B cell (primary cell): ENCODE measurements at regions of chr1 and their contacts with region 1.

Region 1: DNA sequence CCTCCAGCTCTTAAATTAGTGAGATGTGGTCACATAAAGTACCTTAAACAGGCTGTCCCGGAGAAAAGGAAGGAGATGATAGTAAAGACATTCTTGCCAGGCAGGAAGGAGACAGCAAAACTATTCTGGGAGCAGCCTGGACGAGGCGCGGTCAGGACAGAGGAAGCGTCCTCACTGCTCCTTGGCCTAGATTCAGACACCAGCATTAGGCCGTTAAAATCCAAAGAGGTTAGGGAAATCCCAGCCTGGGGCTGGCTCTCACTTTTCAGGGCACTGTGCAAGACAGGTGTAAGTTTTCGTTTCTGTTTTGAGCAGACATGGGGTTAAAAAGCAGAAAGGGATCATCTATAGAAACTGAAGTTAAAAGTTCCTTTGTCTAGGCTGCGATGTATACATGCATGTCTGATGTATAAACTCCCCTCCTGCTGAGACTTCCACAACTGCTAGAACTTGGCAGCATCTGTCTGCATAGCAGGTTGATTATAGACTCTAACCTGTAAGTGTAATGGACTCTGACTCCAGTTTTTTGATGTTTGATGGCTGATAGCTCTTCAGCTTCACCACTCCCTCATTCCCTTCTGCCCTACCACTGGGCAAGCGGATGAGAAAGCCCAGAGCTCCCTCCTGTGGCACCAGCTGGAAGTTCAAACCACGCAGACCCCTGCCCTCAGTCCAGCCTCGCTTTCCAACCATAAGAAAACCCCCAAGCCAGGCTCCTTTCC is 21.5 kb downstream of the STPG1 start:
- DNase-seq: peak; percentile 80
- ATAC-seq: peak; percentile 75
- H3K4me3 ChIP-seq: peak overlapping the region in 2 of 5 experiments; percentile 5 to 37
- H3K4me3 Mint-ChIP-seq: peak overlapping the region; percentile 81
- H3K27ac ChIP-seq: peak overlapping the region; percentile 81 to 92
- H3K27ac Mint-ChIP-seq: peak overlapping the region; percentile 92
- H3K4me1 ChIP-seq: peaks cover 26 to 33% of the 10 kb centered on the region in 2 donors
- H3K4me1 Mint-ChIP-seq: peaks cover 31% of the 10 kb centered on the region
- H3K27me3 ChIP-seq: no peaks in the 10 kb centered on the region
- H3K27me3 Mint-ChIP-seq: no peaks in the 10 kb centered on the region
- CTCF ChIP-seq: peak; percentile 74

Region 2: DNA sequence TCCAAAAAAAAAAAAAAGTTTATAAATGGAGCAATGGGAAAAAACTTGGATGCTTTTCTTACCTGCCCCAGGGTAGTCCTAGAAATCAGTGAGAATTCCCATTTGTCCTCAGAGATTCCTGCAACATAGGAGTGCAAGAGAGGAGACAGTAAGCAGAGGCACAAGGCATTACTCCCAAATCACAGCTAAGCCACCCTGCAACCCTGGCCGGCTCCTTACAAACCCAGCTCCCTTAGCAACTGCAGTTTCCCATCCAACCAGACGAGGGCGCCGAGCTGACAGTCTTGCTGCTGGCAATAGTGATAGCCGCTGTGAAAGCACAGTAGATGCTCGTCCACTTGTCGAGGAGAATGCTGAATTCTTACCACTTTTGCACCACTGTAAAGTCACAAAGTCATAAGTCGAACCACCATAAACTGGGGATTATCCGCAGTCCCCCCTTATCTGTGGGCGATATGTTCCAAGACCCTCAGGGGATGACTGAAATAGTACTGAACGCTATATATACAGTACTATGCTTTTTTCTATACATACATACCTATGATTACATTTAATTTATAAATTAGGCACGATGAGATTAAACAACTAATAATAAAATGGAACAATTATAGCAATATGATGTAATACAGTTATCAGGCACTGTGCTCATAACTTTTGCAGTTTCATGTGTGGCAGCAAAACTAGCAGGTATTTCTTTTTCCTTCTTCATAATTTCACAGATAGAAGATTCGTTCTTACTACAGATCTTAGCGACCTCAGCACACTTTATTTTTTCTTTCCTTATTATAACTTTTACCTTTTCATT is 619.8 kb before region 1 on chr1:
- CTCF ChIA-PET with region 1: interaction called, 22 read pairs
- POLR2A ChIA-PET with region 1: no interaction called
- intact Hi-C with region 1: no loop called
- DNase-seq: peak; percentile 86
- ATAC-seq: peak; percentile 100
- H3K4me3 ChIP-seq: no peak overlapping the region
- H3K4me3 Mint-ChIP-seq: no peak overlapping the region
- H3K27ac ChIP-seq: no peak overlapping the region
- H3K27ac Mint-ChIP-seq: no peak overlapping the region
- H3K4me1 ChIP-seq: peaks cover 4 to 5% of the 10 kb centered on the region in 2 donors
- H3K4me1 Mint-ChIP-seq: peaks cover 9% of the 10 kb centered on the region
- H3K27me3 ChIP-seq: no peaks in the 10 kb centered on the region
- H3K27me3 Mint-ChIP-seq: no peaks in the 10 kb centered on the region
- CTCF ChIP-seq: peak; percentile 92

Region 3: DNA sequence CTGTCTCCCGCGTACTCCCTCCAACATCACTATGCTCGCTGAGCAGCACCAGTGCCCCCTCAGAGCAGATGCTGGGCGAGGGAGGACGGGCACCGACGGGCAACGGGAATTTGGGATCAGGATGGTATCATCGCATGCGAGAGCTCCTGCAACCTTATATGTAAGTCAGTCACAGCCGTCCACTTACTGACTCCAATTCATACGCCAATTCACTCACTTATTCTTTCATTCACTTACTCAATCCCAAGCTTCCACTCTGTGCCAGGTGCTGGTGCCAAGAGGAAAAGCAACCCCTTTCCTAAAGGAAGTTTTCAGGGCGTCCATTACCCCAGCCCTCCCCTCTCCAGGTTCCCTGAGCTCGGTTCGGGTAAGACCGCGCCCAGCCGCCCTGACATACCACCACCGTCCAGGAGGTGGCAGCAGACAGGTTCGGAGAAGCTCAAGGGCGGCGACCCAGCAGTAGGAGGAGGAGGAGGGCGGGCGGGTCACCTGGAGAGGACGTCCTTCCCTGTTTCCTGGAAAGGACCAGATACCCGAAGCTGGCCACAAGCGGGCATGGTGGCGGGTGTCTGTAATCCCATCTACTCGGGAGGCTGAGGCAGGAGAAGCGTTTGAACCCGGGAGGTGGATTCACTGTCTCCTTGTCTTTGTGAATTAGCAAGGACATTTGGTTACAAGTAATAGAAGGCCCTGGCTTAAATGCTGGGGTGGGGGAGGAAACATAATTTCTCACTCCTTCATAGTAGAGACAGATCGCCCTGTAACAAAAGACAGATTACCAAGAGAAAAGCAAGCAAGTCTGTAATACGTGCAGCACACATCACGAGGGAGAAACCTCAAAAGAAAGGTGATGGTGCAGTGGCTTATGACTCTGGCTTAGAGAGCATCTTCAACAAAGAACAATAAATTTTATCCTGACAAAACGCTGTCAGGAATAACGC is 241.5 kb before region 1 on chr1:
- CTCF ChIA-PET with region 1: interaction called, 387 read pairs
- POLR2A ChIA-PET with region 1: interaction called, 17 read pairs
- intact Hi-C with region 1: loop called (anchors 1 kb)
- DNase-seq: peak; percentile 90
- ATAC-seq: peak; percentile 98
- H3K4me3 ChIP-seq: peak overlapping the region in 4 of 5 experiments; percentile 32 to 50 (median 48)
- H3K4me3 Mint-ChIP-seq: peak overlapping the region; percentile 82
- H3K27ac ChIP-seq: no peak overlapping the region
- H3K27ac Mint-ChIP-seq: peak overlapping the region; percentile 21
- H3K4me1 ChIP-seq: peaks cover 13 to 19% of the 10 kb centered on the region in 2 donors
- H3K4me1 Mint-ChIP-seq: peaks cover 27% of the 10 kb centered on the region
- H3K27me3 ChIP-seq: peaks cover 0 to 7% (median 2%) of the 10 kb centered on the region in 4 experiments
- H3K27me3 Mint-ChIP-seq: peaks cover 3% of the 10 kb centered on the region
- CTCF ChIP-seq: peak; percentile 88

Region 4: GRCh38 chr1:24186993-24187805 is 204.8 kb before region 1 on chr1 and contains the start of gene IFNLR1:
- CTCF ChIA-PET with region 1: interaction called, 616 read pairs
- POLR2A ChIA-PET with region 1: interaction called, 15 read pairs
- intact Hi-C with region 1: no loop called
- DNase-seq: peak; percentile 87
- ATAC-seq: peak; percentile 57
- H3K4me3 ChIP-seq: peak within 1 kb of the TSS; percentile 65 to 85 (median 77)
- H3K4me3 Mint-ChIP-seq: peak within 1 kb of the TSS; percentile 95
- H3K27ac ChIP-seq: peak within 1 kb of the TSS; percentile 82
- H3K27ac Mint-ChIP-seq: peak within 1 kb of the TSS; percentile 93
- H3K4me1 ChIP-seq: peaks cover 69 to 78% of the 10 kb centered on the region in 2 donors
- H3K4me1 Mint-ChIP-seq: peaks cover 83% of the 10 kb centered on the region
- H3K27me3 ChIP-seq: no peaks in the 10 kb centered on the region
- H3K27me3 Mint-ChIP-seq: no peaks in the 10 kb centered on the region
- CTCF ChIP-seq: no peak
- total RNA-seq, gene IFNLR1: 38.0 and 39.7 TPM in 2 replicates

Region 5: DNA sequence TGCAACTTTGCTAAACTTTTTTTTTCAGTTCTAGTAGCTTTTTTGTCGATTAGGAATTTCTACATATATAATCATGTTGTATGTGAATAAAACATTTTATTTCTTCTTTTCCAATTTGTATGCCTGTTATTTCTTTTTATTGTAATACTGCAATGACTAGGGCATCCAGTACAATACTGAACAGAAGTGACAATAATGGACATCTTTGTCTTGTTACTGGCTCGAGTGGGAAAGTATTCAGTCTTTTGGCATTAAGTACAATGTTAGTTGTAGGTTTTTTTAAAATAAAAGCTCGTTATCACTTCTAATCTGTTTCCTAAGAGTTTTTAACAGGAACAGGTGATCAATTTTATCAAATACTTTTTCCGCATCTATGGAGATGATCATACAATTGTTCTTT is 11.8 kb after region 1 on chr1:
- CTCF ChIA-PET with region 1: interaction called, 20 read pairs
- POLR2A ChIA-PET with region 1: no interaction called
- intact Hi-C with region 1: no loop called
- DNase-seq: no peak
- ATAC-seq: no peak
- H3K4me3 ChIP-seq: no peak overlapping the region
- H3K4me3 Mint-ChIP-seq: no peak overlapping the region
- H3K27ac ChIP-seq: no peak overlapping the region
- H3K27ac Mint-ChIP-seq: no peak overlapping the region
- H3K4me1 ChIP-seq: no peaks in the 10 kb centered on the region
- H3K4me1 Mint-ChIP-seq: no peaks in the 10 kb centered on the region
- H3K27me3 ChIP-seq: no peaks in the 10 kb centered on the region
- H3K27me3 Mint-ChIP-seq: no peaks in the 10 kb centered on the region
- CTCF ChIP-seq: no peak

Region 6: DNA sequence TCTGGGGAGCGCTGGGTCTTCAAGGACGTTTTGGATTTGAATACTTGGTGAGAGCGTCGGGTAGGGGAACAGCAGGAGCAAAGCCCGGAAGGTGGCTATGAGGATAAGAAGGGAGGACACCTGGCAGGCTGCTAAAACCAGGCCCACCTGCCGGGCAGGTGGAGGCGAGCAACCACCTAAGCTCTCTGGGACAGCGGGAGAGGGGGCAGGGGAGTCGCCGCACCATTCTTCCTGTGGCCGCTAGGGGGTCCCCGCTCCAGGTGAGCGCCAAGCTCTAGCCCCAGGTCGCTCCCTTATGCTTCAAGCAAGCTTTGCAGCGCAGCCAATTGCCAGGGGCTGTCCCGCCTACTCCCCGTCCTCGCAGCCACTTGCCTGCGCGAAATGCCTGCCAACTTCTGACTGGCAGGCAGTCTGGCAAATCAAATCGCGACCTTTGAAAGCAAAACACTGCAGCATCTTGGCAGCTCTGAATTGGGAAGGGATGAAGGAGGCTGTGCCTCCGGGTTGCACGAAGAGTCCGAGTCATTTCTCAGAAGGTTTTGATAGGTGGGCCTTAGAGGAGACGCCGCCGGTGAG is 23.4 kb after region 1 on chr1 and contains the start of gene NIPAL3:
- CTCF ChIA-PET with region 1: interaction called, 86 read pairs
- POLR2A ChIA-PET with region 1: interaction called, 3 read pairs
- intact Hi-C with region 1: loop called (anchors 1 kb)
- DNase-seq: peak; percentile 98
- ATAC-seq: peak; percentile 91
- H3K4me3 ChIP-seq: peak within 1 kb of the TSS; percentile 79 to 94 (median 86)
- H3K4me3 Mint-ChIP-seq: peak within 1 kb of the TSS; percentile 92
- H3K27ac ChIP-seq: peak within 1 kb of the TSS; percentile 37 to 55
- H3K27ac Mint-ChIP-seq: peak within 1 kb of the TSS; percentile 84
- H3K4me1 ChIP-seq: peaks cover 26 to 36% of the 10 kb centered on the region in 2 donors
- H3K4me1 Mint-ChIP-seq: peaks cover 49% of the 10 kb centered on the region
- H3K27me3 ChIP-seq: no peaks in the 10 kb centered on the region
- H3K27me3 Mint-ChIP-seq: no peaks in the 10 kb centered on the region
- CTCF ChIP-seq: peak; percentile 89
- total RNA-seq, gene NIPAL3: 31.6 and 38.8 TPM in 2 replicates